ENCODE measurements at regions of chr17 and their contacts with region 1.

Region 1: GRCh38 chr17:65794572-65794971 is 233.1 kb upstream of the AXIN2 start:
- DNase-seq: no peak
- H3K4me3 ChIP-seq: no peak overlapping the region
- H3K27ac ChIP-seq: no peak overlapping the region
- H3K4me1 ChIP-seq: no peaks in the 10 kb centered on the region
- H3K27me3 ChIP-seq: no peaks in the 10 kb centered on the region
- CTCF ChIP-seq: peak in 2 of 4 experiments; percentile 38 to 54
- POLR2A ChIP-seq: no peak

Region 2: DNA sequence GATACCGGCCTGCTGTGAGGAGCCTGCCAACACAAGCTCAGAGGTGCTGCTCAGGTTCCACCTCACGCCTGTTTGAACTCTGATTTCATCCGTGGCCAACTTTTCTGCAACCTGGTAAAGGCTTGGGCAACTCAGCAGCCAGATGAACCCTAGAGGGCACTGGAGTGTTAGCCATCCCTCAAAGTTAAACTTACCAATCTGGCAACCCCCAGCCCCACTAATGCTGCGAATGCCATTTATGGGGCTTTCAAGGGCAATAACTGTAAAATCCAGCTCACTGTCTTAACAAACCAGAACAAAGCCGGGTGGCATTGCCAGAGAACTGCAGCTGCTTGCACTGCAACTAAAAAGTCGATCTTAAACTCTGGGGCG is 338.6 kb before region 1 on chr17:
- intact Hi-C with region 1: loop called (anchors 10 kb)
- DNase-seq: peak; percentile 18
- H3K4me3 ChIP-seq: no peak overlapping the region
- H3K27ac ChIP-seq: no peak overlapping the region
- H3K4me1 ChIP-seq: no peaks in the 10 kb centered on the region
- H3K27me3 ChIP-seq: no peaks in the 10 kb centered on the region
- CTCF ChIP-seq: peak in 2 of 4 experiments; percentile 27 to 39
- POLR2A ChIP-seq: no peak

Measured in prostate gland (tissue), 2 donors.